ENCODE measurements at regions of chr6 and their contacts with region 1.

Region 1: GRCh38 chr6:44655412-44656342 is 268.2 kb downstream of the CDC5L start:
- DNase-seq: peak; percentile 82
- ATAC-seq: peak; percentile 81
- H3K4me3 Mint-ChIP-seq: peak overlapping the region; percentile 48
- H3K27ac Mint-ChIP-seq: peak overlapping the region; percentile 69
- H3K4me1 Mint-ChIP-seq: peaks cover 7% of the 10 kb centered on the region
- H3K27me3 Mint-ChIP-seq: peaks cover 7% of the 10 kb centered on the region

Region 2: GRCh38 chr6:45001663-45002062 is 346.0 kb after region 1 on chr6:
- CTCF ChIA-PET with region 1: interaction called, 11 read pairs
- POLR2A ChIA-PET with region 1: no interaction called
- DNase-seq: peak; percentile 36
- ATAC-seq: peak; percentile 96
- H3K4me3 Mint-ChIP-seq: peak overlapping the region; percentile 38
- H3K27ac Mint-ChIP-seq: peak overlapping the region; percentile 82
- H3K4me1 Mint-ChIP-seq: peaks cover 33% of the 10 kb centered on the region
- H3K27me3 Mint-ChIP-seq: no peaks in the 10 kb centered on the region

Region 3: GRCh38 chr6:45052325-45052724 is 396.6 kb after region 1 on chr6:
- CTCF ChIA-PET with region 1: no interaction called
- POLR2A ChIA-PET with region 1: no interaction called
- DNase-seq: no peak
- ATAC-seq: no peak
- H3K4me3 Mint-ChIP-seq: no peak overlapping the region
- H3K27ac Mint-ChIP-seq: no peak overlapping the region
- H3K4me1 Mint-ChIP-seq: peaks cover 27% of the 10 kb centered on the region
- H3K27me3 Mint-ChIP-seq: no peaks in the 10 kb centered on the region

Region 4: DNA sequence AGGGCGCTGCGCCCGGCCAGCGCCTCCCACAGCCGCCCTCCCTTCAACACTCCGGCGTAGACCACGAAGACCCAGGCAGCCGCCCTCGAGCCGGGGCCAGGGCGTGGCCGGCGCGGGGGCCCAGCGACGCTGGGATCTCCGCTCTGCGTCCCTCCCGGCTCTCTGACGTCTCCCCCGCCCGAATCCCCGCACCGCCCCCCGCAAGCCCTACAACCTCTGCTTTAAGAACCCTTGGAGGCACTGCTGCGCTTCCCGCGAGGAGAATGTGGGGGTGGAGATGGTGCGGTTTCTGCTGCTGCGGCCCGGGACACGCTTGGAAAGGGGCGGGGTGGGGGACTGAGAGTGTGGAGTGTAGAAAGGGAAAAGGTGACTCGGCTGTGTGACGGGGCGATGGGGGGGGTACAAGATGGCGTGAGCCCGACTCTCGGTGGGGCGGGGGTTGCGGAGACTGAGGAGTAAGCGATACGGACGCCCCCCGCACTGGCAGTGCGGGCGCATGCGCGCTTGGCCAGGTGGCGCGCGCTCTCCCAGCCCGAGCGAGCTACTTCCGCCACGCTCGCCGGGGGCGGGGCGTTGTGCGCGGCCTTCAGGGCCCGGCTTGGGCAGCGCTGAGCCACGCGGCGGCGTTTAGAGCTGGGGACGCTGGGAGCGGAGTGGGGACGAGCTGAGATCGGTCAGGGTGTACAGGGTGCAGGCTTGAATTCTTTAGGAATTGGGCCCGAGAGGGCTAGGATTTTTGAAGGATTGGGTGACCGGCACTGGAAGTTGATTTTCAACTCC is 722.1 kb after region 1 on chr6 and contains the start of gene SUPT3H:
- CTCF ChIA-PET with region 1: interaction called, 13 read pairs
- POLR2A ChIA-PET with region 1: interaction called, 6 read pairs
- DNase-seq: peak; percentile 93
- ATAC-seq: peak; percentile 90
- H3K4me3 Mint-ChIP-seq: peak within 1 kb of the TSS; percentile 98
- H3K27ac Mint-ChIP-seq: peak within 1 kb of the TSS; percentile 100
- H3K4me1 Mint-ChIP-seq: peaks cover 18% of the 10 kb centered on the region
- H3K27me3 Mint-ChIP-seq: no peaks in the 10 kb centered on the region
- total RNA-seq, gene SUPT3H: 6.4 to 9.1 TPM

Region 5: GRCh38 chr6:45421709-45422502 is 766.2 kb after region 1 on chr6:
- CTCF ChIA-PET with region 1: interaction called, 24 read pairs
- POLR2A ChIA-PET with region 1: no interaction called
- DNase-seq: peak; percentile 57
- ATAC-seq: peak; percentile 38
- H3K4me3 Mint-ChIP-seq: peak overlapping the region; percentile 88
- H3K27ac Mint-ChIP-seq: peak overlapping the region; percentile 82
- H3K4me1 Mint-ChIP-seq: peaks cover 37% of the 10 kb centered on the region
- H3K27me3 Mint-ChIP-seq: peaks cover 38% of the 10 kb centered on the region

Measured in activated CD8-positive, alpha-beta T cell treated with anti-CD3 and anti-CD28 coated beads, Interleukin-2, amount 10 ng/mL, durations not matched to agents 7 days and 5 days (primary cell).